Body of pancreas (tissue), 4 donors: ENCODE measurements at regions of chr7 and their contacts with region 1.

Region 1: DNA sequence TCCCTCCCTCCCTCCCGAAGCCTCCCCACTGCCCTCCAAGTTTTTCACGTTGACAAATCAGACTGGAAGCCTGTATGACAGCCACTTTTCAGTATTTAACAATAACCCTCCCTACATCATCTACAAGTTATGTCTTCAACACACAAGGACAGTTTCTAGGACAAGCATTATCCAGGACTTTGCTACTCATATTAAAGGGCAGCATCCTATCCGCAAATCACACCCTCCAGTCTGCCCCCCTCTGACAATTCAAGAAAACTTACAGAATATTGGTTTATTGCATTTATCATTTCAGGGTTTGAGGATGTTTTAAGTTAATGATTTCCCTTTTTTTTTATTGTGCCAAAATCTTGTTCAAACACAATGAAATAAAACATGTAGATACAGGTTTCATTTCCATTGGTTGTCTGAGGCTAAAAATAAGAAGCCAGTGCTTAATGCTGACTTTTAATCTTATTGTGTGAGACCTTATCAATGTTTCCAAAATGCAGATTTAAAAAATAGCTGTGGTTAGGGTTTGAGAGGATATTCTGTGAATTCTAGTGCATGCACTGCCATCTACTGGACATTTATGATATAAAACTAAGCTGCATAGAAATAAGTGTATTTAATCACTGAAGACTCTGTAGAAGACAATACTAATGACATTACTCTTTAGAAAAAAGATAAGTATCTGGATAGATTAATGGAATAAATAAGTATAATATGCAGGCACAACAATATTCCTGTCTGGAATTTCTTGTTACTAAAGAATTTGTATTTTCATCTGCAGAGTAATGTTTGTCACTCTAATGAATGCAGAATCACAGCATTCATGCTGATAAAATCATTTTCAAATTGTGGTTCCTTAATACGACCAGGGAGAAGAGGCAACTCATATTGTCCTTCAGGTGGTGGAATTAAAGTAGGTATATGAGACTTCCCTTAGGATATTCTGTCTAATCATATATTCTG is 64.1 kb downstream of the CAV1 start:
- DNase-seq: no peak
- ATAC-seq: no peak
- H3K4me3 ChIP-seq: no peak overlapping the region
- H3K27ac ChIP-seq: no peak overlapping the region
- H3K4me1 ChIP-seq: peaks cover 37% of the 10 kb centered on the region
- H3K27me3 ChIP-seq: no peaks in the 10 kb centered on the region
- CTCF ChIP-seq: peak; percentile 43 to 83 (median 76)
- POLR2A ChIP-seq: no peak

Region 2: GRCh38 chr7:116165717-116166116 is 423.2 kb before region 1 on chr7:
- intact Hi-C with region 1: loop called (anchors 10 kb)
- DNase-seq: peak in 1 of 4 donors; percentile 20
- ATAC-seq: no peak
- H3K4me3 ChIP-seq: no peak overlapping the region
- H3K27ac ChIP-seq: no peak overlapping the region
- H3K4me1 ChIP-seq: peaks cover 10% of the 10 kb centered on the region
- H3K27me3 ChIP-seq: no peaks in the 10 kb centered on the region
- CTCF ChIP-seq: no peak
- POLR2A ChIP-seq: no peak

Region 3: DNA sequence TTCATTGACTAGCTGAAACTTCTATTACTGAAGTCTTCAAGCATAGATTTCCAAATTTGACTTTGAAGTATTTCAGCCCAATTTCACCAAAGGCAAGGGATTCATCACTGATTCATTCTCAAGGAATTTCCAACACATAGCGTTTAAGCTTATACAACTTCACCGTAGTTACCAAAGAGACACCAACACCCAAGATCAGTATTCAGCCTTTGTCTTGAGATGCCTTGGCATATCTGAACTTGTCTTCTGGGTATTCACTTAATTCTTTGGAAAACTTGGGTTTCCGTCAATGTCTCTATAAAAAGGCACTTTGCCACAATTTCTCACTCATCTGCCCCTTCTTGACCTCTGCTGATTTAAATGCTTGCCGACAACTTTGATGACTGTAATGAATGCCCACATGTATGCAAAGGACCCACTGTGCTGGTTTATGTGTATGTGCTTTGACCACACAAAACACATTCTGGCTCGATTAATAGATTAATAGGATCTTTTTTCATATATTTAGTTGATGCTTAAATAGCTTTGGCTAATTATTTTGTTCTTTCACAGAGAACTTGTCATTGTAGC is 329.0 kb before region 1 on chr7:
- intact Hi-C with region 1: loop called (anchors 5 kb)
- DNase-seq: no peak
- ATAC-seq: no peak
- H3K4me3 ChIP-seq: no peak overlapping the region
- H3K27ac ChIP-seq: no peak overlapping the region
- H3K4me1 ChIP-seq: no peaks in the 10 kb centered on the region
- H3K27me3 ChIP-seq: no peaks in the 10 kb centered on the region
- CTCF ChIP-seq: no peak
- POLR2A ChIP-seq: no peak

Region 4: GRCh38 chr7:116499168-116500077 is 89.5 kb before region 1 on chr7 and contains the start of gene CAV2:
- intact Hi-C with region 1: no loop called
- DNase-seq: peak; percentile 66 to 82 (median 71)
- ATAC-seq: peak; percentile 89
- H3K4me3 ChIP-seq: peak within 1 kb of the TSS; percentile 34 to 63
- H3K27ac ChIP-seq: peak within 1 kb of the TSS; percentile 68 to 84 (median 78)
- H3K4me1 ChIP-seq: peaks cover 34% of the 10 kb centered on the region
- H3K27me3 ChIP-seq: no peaks in the 10 kb centered on the region
- CTCF ChIP-seq: no peak
- POLR2A ChIP-seq: peak; percentile 21 to 62 (median 40)
- total RNA-seq, gene CAV2: 47.0 to 51.1 TPM

Region 5: GRCh38 chr7:116809636-116810266 is 220.8 kb after region 1 on chr7:
- intact Hi-C with region 1: loop called (anchors 10 kb)
- DNase-seq: peak in 3 of 4 donors; percentile 18 to 57 (median 38)
- ATAC-seq: peak; percentile 90
- H3K4me3 ChIP-seq: no peak overlapping the region
- H3K27ac ChIP-seq: peak overlapping the region; percentile 35 to 81 (median 62)
- H3K4me1 ChIP-seq: peaks cover 31% of the 10 kb centered on the region
- H3K27me3 ChIP-seq: no peaks in the 10 kb centered on the region
- CTCF ChIP-seq: peak; percentile 34 to 93 (median 76)
- POLR2A ChIP-seq: no peak